ENCODE measurements at regions of chr15 and their contacts with region 1.

Region 1: GRCh38 chr15:55255714-55256113 is 33.9 kb downstream of the RAB27A start:
- DNase-seq: no peak
- ATAC-seq: peak; percentile 75
- H3K4me3 ChIP-seq: peak overlapping the region; percentile 4; the same call in 1 of the 2 replicates
- H3K27ac ChIP-seq: peak overlapping the region; percentile 4
- H3K4me1 ChIP-seq: peaks cover 24% of the 10 kb centered on the region
- H3K27me3 ChIP-seq: no peaks in the 10 kb centered on the region
- CTCF ChIP-seq: no peak
- EP300 ChIP-seq: no peak
- POLR2A ChIP-seq: no peak
- RAD21 ChIP-seq: no peak

Region 2: GRCh38 chr15:55267401-55268175 is 11.9 kb after region 1 on chr15:
- CTCF ChIA-PET with region 1: interaction called, 8 read pairs
- POLR2A ChIA-PET with region 1: interaction called, 5 read pairs
- RAD21 ChIA-PET with region 1: interaction called, 9 read pairs
- SMC1A ChIA-PET with region 1: interaction called, 18 read pairs
- in situ Hi-C with region 1: no loop called
- intact Hi-C with region 1: no loop called
- DNase-seq: no peak
- ATAC-seq: peak; percentile 98
- H3K4me3 ChIP-seq: no peak overlapping the region
- H3K27ac ChIP-seq: no peak overlapping the region
- H3K4me1 ChIP-seq: peaks cover 7% of the 10 kb centered on the region
- H3K27me3 ChIP-seq: no peaks in the 10 kb centered on the region
- CTCF ChIP-seq: no peak
- EP300 ChIP-seq: no peak
- POLR2A ChIP-seq: no peak
- RAD21 ChIP-seq: no peak

Region 3: GRCh38 chr15:55290528-55291057 is 34.9 kb after region 1 on chr15:
- CTCF ChIA-PET with region 1: interaction called, 3 read pairs
- POLR2A ChIA-PET with region 1: interaction called, 4 read pairs
- RAD21 ChIA-PET with region 1: interaction called, 19 read pairs
- SMC1A ChIA-PET with region 1: interaction called, 8 read pairs
- in situ Hi-C with region 1: no loop called
- intact Hi-C with region 1: loop called (anchors 2 kb)
- DNase-seq: no peak
- ATAC-seq: peak; percentile 83
- H3K4me3 ChIP-seq: peak overlapping the region; percentile 89; the same call in 1 of the 2 replicates
- H3K27ac ChIP-seq: no peak overlapping the region; the same call in 1 of the 2 replicates
- H3K4me1 ChIP-seq: no peaks in the 10 kb centered on the region; the same call in 1 of the 2 replicates
- H3K27me3 ChIP-seq: no peaks in the 10 kb centered on the region
- CTCF ChIP-seq: peak; percentile 90 to 97 (median 92)
- EP300 ChIP-seq: no peak; a peak in 1 of 4 replicates
- POLR2A ChIP-seq: no peak
- RAD21 ChIP-seq: peak; percentile 96